CD8-positive, alpha-beta T cell (primary cell): ENCODE measurements at regions of chr16 and their contacts with region 1.

Region 1: DNA sequence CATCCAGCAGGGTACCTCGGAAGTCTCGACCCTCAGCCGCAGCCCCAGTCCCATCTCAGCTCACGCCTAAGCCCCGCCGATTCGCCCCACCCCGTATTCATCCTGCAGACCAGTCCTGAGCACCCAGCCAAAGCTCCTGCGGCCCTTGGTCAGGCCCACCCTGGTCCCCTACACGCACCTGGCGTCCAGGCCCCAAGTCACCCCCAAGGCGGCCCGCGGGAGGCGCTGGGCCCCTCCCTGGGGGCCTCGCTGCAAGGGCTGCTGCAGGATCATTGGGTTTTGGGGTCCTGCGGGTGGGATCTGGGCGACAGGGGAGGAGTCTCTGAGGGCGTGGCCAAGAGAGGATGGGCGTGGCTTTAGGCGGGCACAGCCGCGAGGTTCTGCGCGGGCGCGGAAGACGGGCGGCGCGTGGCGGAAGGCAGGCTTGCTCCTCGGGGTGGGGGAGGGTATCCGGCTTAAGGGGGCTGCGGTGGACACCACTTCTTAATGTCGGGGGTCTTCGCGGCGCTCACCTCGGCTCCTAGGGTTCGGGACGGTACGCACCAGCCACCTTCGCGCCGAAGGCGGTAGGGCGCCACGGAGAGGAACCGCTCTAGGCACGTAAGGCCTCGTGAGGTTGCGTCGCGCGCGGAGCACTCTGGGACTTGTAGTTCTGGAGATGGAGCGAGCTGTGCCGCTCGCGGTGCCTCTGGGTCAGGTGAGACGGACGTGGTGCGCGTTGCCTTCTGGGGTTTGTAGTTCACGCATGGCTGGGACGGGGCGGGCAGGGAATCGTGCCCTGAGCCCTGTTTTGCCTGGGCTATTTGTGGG is at the starts of genes HCFC1R1 and THOC6:
- DNase-seq: peak; percentile 88 to 98 (median 96)
- ATAC-seq: peak; percentile 73
- H3K4me3 ChIP-seq: peak within 1 kb of the TSS; percentile 88 to 90
- H3K4me3 Mint-ChIP-seq: peak within 1 kb of the TSS; percentile 95
- H3K27ac ChIP-seq: peak within 1 kb of the TSS; percentile 70 to 96
- H3K27ac Mint-ChIP-seq: peak within 1 kb of the TSS; percentile 95
- H3K4me1 ChIP-seq: peaks cover 65% of the 10 kb centered on the region
- H3K4me1 Mint-ChIP-seq: peaks cover 49% of the 10 kb centered on the region
- H3K27me3 ChIP-seq: peaks cover 0 to 3% of the 10 kb centered on the region in 2 experiments
- H3K27me3 Mint-ChIP-seq: peaks cover 3% of the 10 kb centered on the region
- CTCF ChIP-seq: no peak
- total RNA-seq, gene HCFC1R1: 6.4 to 7.1 TPM
- total RNA-seq, gene THOC6: 13.1 to 14.0 TPM

Region 2: DNA sequence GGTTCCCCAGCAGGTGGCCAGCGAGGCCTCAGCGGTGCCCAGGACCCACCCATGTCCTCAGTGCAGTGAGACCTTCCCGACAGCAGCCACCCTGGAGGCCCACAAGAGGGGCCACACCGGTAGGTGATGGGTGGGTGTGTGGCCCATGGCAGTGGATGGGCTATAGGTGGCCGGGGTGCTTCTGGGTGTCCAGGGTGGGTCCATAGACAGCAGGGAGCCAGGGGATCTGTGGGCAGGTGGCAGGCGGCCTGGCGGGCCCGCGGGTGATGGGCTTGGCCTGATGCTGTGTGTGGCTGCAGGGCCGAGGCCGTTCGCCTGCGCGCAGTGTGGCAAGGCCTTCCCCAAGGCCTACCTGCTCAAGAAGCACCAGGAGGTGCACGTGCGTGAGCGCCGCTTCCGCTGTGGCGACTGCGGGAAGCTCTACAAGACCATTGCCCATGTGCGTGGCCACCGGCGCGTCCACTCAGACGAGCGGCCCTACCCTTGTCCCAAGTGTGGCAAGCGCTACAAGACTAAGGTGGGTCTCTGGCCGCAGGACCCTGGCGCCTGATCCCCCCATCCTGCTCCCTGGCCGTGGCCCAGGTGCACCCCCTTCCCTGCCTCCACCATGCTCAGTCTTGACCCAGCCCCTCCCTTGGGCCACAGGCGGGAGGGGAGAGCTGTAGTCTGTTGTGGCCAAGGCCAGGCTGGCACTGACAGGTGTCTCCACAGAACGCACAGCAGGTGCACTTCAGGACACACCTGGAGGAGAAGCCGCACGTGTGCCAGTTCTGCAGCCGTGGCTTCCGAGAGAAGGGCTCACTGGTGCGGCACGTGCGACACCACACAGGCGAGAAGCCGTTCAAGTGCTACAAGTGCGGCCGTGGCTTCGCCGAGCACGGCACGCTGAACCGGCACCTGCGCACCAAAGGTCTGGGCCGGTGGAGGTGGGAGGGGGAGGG is 789.7 kb before region 1 on chr16:
- CTCF ChIA-PET with region 1: no interaction called
- POLR2A ChIA-PET with region 1: no interaction called
- intact Hi-C with region 1: no loop called
- DNase-seq: no peak
- ATAC-seq: no peak
- H3K4me3 ChIP-seq: no peak overlapping the region
- H3K4me3 Mint-ChIP-seq: no peak overlapping the region
- H3K27ac ChIP-seq: no peak overlapping the region
- H3K27ac Mint-ChIP-seq: no peak overlapping the region
- H3K4me1 ChIP-seq: no peaks in the 10 kb centered on the region
- H3K4me1 Mint-ChIP-seq: peaks cover 3% of the 10 kb centered on the region
- H3K27me3 ChIP-seq: peaks cover 0 to 4% of the 10 kb centered on the region in 2 experiments
- H3K27me3 Mint-ChIP-seq: peaks cover 3% of the 10 kb centered on the region
- CTCF ChIP-seq: no peak

Region 3: GRCh38 chr16:2603165-2604015 is 420.5 kb before region 1 on chr16:
- CTCF ChIA-PET with region 1: no interaction called
- POLR2A ChIA-PET with region 1: no interaction called
- intact Hi-C with region 1: no loop called
- DNase-seq: peak; percentile 58 to 87 (median 77)
- ATAC-seq: peak; percentile 58
- H3K4me3 ChIP-seq: peak overlapping the region; percentile 64 to 76
- H3K4me3 Mint-ChIP-seq: peak overlapping the region; percentile 97
- H3K27ac ChIP-seq: peak overlapping the region; percentile 32 to 52
- H3K27ac Mint-ChIP-seq: peak overlapping the region; percentile 84
- H3K4me1 ChIP-seq: peaks cover 3% of the 10 kb centered on the region
- H3K4me1 Mint-ChIP-seq: peaks cover 29% of the 10 kb centered on the region
- H3K27me3 ChIP-seq: no peaks in the 10 kb centered on the region
- H3K27me3 Mint-ChIP-seq: no peaks in the 10 kb centered on the region
- CTCF ChIP-seq: no peak

Region 4: DNA sequence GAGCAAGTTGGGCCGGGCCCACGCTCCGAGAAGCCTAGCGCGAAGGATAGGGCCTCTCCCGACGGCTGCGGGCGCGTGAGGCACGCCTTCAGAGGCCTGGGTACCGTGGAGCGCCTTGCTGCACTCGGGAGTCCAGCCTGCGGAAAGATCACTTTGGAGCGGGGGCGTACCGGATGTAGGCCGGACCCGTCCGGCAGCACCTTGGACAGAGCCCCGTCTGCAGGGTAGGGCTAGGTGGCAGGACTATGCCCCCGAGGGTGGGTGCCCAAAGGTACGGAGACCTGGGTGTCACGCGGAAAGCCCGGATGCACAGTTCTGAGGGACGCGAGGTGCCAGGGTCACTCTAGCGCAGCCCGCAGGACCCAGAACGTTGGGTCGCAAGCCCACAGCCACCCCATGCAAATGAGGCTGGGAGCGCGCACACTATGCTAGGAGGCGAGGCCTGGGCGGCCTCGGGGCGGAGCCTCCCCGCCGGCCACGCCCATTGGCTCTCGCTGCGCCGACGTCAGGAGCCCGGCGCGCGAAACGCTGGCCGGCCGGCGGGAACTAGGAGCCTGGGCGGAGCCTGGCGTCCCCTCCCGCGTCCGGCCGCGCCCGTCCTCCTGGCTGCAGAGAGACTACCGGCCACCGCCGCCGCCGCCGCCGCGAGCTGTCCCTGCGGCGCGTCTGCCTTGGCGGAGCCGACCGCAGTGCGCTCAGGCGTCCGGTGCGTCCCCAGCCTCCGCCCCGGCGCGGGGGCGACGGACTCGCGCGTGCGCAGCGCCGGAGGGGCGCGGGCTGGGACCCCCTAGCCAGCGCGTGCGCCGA is 54.9 kb before region 1 on chr16 and contains the start of gene PAQR4:
- CTCF ChIA-PET with region 1: interaction called, 3 read pairs
- POLR2A ChIA-PET with region 1: interaction called, 3 read pairs
- intact Hi-C with region 1: loop called in 1 of 2 experiments (anchors 5 kb)
- DNase-seq: peak; percentile 43 to 89 (median 71)
- ATAC-seq: peak; percentile 72
- H3K4me3 ChIP-seq: peak within 1 kb of the TSS; percentile 48 to 50
- H3K4me3 Mint-ChIP-seq: peak within 1 kb of the TSS; percentile 74
- H3K27ac ChIP-seq: no peak within 1 kb of the TSS
- H3K27ac Mint-ChIP-seq: no peak within 1 kb of the TSS
- H3K4me1 ChIP-seq: peaks cover 48% of the 10 kb centered on the region
- H3K4me1 Mint-ChIP-seq: peaks cover 23% of the 10 kb centered on the region
- H3K27me3 ChIP-seq: peaks cover 33% of the 10 kb centered on the region in 2 experiments
- H3K27me3 Mint-ChIP-seq: peaks cover 30% of the 10 kb centered on the region
- CTCF ChIP-seq: no peak
- total RNA-seq, gene PAQR4: 0.14 to 0.22 TPM

Region 5: GRCh38 chr16:3045357-3045728 is 21.5 kb after region 1 on chr16:
- CTCF ChIA-PET with region 1: interaction called, 106 read pairs
- POLR2A ChIA-PET with region 1: interaction called, 21 read pairs
- intact Hi-C with region 1: no loop called
- DNase-seq: peak in 5 of 9 experiments; percentile 38 to 56 (median 49)
- ATAC-seq: peak; percentile 69
- H3K4me3 ChIP-seq: peak overlapping the region; percentile 31 to 55
- H3K4me3 Mint-ChIP-seq: peak overlapping the region; percentile 80
- H3K27ac ChIP-seq: no peak overlapping the region
- H3K27ac Mint-ChIP-seq: peak overlapping the region; percentile 22
- H3K4me1 ChIP-seq: peaks cover 20% of the 10 kb centered on the region
- H3K4me1 Mint-ChIP-seq: peaks cover 20% of the 10 kb centered on the region
- H3K27me3 ChIP-seq: peaks cover 26 to 46% of the 10 kb centered on the region in 2 experiments
- H3K27me3 Mint-ChIP-seq: peaks cover 26% of the 10 kb centered on the region
- CTCF ChIP-seq: no peak

Region 6: GRCh38 chr16:3123986-3124886 is 100.4 kb after region 1 on chr16:
- CTCF ChIA-PET with region 1: interaction called, 184 read pairs
- POLR2A ChIA-PET with region 1: interaction called, 5 read pairs
- intact Hi-C with region 1: no loop called
- DNase-seq: peak; percentile 88 to 98 (median 97)
- ATAC-seq: peak; percentile 90
- H3K4me3 ChIP-seq: peak overlapping the region; percentile 72 to 89
- H3K4me3 Mint-ChIP-seq: peak overlapping the region; percentile 98
- H3K27ac ChIP-seq: peak overlapping the region; percentile 44 to 72
- H3K27ac Mint-ChIP-seq: peak overlapping the region; percentile 95
- H3K4me1 ChIP-seq: peaks cover 30% of the 10 kb centered on the region
- H3K4me1 Mint-ChIP-seq: peaks cover 45% of the 10 kb centered on the region
- H3K27me3 ChIP-seq: no peaks in the 10 kb centered on the region
- H3K27me3 Mint-ChIP-seq: no peaks in the 10 kb centered on the region
- CTCF ChIP-seq: no peak

Region 7: DNA sequence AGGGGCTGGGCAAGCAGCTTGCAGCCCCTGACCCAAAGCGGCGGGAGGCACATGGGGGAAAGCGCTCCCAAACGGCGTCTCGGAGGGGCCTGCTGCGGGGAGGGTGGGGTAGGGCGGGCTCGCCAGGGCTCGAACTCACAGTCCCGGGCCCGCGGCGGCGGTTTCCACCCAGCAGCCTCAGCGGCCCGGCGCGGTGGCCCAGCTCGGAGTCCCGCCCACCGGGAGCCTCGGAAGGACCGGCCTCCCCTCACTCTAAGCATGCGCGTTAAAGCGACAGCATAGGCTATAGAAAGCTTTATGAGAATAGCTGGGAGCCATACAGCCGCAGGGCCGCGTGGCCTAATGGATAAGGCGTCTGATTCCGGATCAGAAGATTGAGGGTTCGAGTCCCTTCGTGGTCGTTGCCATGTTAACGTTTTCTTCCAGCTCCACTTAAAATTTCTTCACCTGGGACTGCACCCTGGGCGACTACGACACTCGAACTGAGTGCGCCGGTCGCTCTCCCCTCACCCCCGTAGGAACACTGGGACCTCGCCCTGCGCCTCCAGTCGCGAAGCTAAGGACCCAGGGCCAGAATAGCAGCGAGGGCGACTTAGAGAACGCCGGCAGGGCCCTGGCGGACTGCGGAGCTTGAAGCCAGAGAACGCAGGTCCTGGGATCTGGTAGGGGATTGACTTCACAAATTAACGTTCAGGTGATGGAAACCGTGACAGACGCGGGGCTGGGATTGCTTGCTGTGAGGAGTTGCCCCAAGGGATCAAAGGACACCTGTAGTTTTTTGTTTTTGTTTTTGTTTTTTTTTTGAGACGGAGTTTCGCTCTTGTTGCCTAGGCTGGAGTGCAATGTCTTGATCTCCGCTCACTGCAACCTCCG is 126.7 kb after region 1 on chr16:
- CTCF ChIA-PET with region 1: no interaction called
- POLR2A ChIA-PET with region 1: no interaction called
- intact Hi-C with region 1: loop called in 1 of 2 experiments (anchors 1 kb)
- DNase-seq: peak; percentile 94 to 100 (median 97)
- ATAC-seq: peak; percentile 82
- H3K4me3 ChIP-seq: peak overlapping the region; percentile 53 to 93
- H3K4me3 Mint-ChIP-seq: peak overlapping the region; percentile 88
- H3K27ac ChIP-seq: peak overlapping the region; percentile 53 to 68
- H3K27ac Mint-ChIP-seq: peak overlapping the region; percentile 88
- H3K4me1 ChIP-seq: peaks cover 23% of the 10 kb centered on the region
- H3K4me1 Mint-ChIP-seq: peaks cover 27% of the 10 kb centered on the region
- H3K27me3 ChIP-seq: no peaks in the 10 kb centered on the region
- H3K27me3 Mint-ChIP-seq: no peaks in the 10 kb centered on the region
- CTCF ChIP-seq: no peak

Region 8: GRCh38 chr16:3494286-3494973 is 470.6 kb after region 1 on chr16:
- CTCF ChIA-PET with region 1: no interaction called
- POLR2A ChIA-PET with region 1: no interaction called
- intact Hi-C with region 1: no loop called
- DNase-seq: no peak
- ATAC-seq: no peak
- H3K4me3 ChIP-seq: no peak overlapping the region
- H3K4me3 Mint-ChIP-seq: no peak overlapping the region
- H3K27ac ChIP-seq: no peak overlapping the region
- H3K27ac Mint-ChIP-seq: no peak overlapping the region
- H3K4me1 ChIP-seq: no peaks in the 10 kb centered on the region
- H3K4me1 Mint-ChIP-seq: peaks cover 4% of the 10 kb centered on the region
- H3K27me3 ChIP-seq: no peaks in the 10 kb centered on the region
- H3K27me3 Mint-ChIP-seq: no peaks in the 10 kb centered on the region
- CTCF ChIP-seq: no peak